Tibial artery (tissue), 4 donors: ENCODE measurements at regions of chr7 and their contacts with region 1.

Region 1: DNA sequence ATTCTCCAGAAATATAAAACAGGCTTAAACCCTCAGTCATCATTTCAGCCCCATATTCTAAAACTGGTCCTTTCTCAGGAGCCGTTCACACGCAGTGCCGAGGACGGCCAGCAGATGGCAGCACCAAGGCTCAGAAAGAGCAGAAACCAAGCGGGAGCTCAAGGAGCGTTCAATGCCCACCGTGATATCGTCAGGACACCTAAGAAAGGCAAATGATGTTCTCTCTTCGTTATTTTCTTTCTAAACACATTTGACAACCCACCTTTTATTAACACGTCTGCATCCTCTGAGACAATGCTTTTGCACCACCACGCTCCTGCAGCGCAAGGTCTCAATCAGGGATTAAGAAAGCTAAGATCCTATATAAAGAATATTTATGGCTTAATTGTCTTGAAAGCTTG is 45.7 kb upstream of the RBM33 start:
- DNase-seq: peak; percentile 82 to 85
- H3K4me3 ChIP-seq: no peak overlapping the region
- H3K27ac ChIP-seq: no peak overlapping the region
- H3K4me1 ChIP-seq: no peaks in the 10 kb centered on the region
- H3K27me3 ChIP-seq: peaks cover 0 to 49% of the 10 kb centered on the region in 2 donors
- CTCF ChIP-seq: peak; percentile 91 to 98

Region 2: DNA sequence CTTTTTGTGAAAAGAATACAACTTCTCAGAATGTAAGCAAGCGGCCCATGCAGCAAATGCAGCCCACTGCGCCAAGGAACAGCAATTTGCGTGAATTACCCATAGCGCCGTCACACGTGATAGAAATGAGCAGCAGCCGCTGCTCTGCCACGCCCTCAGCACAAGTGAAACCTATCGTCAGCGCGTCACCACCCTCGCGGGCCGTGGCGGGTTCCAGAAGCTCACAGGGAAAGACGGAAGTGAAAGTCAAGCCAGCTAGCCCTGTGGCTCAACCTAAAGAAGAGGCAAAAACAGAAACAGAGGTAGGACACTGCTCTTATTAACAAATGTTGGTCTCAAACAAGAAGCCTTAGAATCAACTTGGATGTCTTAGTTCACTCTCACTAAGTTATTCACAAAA is 143.0 kb after region 1 on chr7:
- intact Hi-C with region 1: loop called (anchors 5 kb)
- DNase-seq: no peak
- H3K4me3 ChIP-seq: no peak overlapping the region
- H3K27ac ChIP-seq: no peak overlapping the region
- H3K4me1 ChIP-seq: no peaks in the 10 kb centered on the region
- H3K27me3 ChIP-seq: no peaks in the 10 kb centered on the region
- CTCF ChIP-seq: no peak